Stomach (tissue), 19 donors: ENCODE measurements at regions of chr7 and their contacts with region 1.

Region 1: GRCh38 chr7:80134536-80135320 is at the start of gene GNAI1:
- DNase-seq: peak; percentile 68 to 92
- H3K4me3 ChIP-seq: peak within 1 kb of the TSS; percentile 66 to 97 (median 82)
- H3K27ac ChIP-seq: peak within 1 kb of the TSS; percentile 89 to 96 (median 94)
- H3K4me1 ChIP-seq: peaks cover 13 to 48% (median 30%) of the 10 kb centered on the region in 4 donors
- H3K27me3 ChIP-seq: peaks cover 0 to 7% (median 0%) of the 10 kb centered on the region in 3 donors
- CTCF ChIP-seq: peak in 4 of 7 experiments; percentile 14 to 63 (median 34)
- EP300 ChIP-seq: no peak
- POLR2A ChIP-seq: no peak
- total RNA-seq, gene GNAI1: 2.6 to 62.4 (median 49.0) TPM

Region 2: GRCh38 chr7:80392229-80393169 is 257.8 kb after region 1 on chr7:
- intact Hi-C with region 1: loop called (anchors 10 kb)
- DNase-seq: peak in 1 of 2 donors; percentile 64
- H3K4me3 ChIP-seq: no peak overlapping the region
- H3K27ac ChIP-seq: no peak overlapping the region
- H3K4me1 ChIP-seq: peaks cover 0 to 13% (median 4%) of the 10 kb centered on the region in 4 donors
- H3K27me3 ChIP-seq: no peaks in the 10 kb centered on the region
- CTCF ChIP-seq: peak in 5 of 7 experiments; percentile 22 to 57 (median 46)
- EP300 ChIP-seq: no peak
- POLR2A ChIP-seq: no peak